Heart right ventricle (tissue), 16 donors: ENCODE measurements at regions of chr4 and their contacts with region 1.

Region 1: DNA sequence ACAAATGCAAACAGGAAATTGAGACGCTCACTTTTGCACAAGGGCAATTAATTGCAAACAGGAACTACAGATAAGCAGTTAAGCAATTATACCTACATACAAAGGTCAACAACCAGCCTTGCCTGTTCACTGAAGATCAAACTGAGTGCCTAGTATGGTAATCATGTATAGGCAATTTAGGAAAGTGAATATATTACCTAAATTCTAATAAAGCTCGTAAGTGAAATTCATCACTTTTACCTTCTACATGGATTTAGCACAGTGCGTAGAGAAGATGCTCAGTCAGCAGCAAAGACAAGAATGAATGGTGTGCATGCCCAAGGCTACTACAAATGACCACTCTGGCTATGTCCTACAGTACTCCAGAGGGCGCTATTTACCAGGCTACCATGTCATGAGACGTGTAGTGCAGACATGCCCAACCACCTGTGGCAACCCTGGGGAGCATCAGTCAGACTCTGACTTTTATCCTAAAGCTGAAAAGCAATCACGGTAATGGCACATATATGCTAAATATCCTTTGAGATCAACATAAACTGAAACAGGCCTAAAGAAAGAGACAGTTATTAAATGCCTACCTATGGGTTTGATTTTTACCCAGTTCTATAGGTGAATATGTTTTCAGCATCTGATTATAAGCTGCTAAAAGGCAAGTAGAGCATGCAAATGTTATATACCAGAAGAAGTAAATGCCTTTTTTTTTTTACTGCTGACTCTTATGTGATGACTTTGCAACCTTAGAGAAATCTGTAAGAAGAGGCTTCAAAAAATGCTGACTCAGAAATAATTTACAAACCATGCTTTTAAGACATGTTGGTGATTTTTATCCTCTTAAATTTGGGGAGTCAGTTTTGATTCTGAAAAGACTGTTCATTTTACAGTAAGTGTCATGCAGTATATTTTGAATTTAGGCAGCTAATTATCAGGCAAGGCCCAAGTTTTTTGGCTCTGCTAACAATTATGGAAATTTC is 178.0 kb downstream of the PPP3CA start:
- DNase-seq: peak in 1 of 2 donors; percentile 72
- ATAC-seq: peak; percentile 87 to 97 (median 94)
- H3K4me3 ChIP-seq: no peak overlapping the region
- H3K27ac ChIP-seq: no peak overlapping the region
- H3K4me1 ChIP-seq: peaks cover 0 to 21% (median 0%) of the 10 kb centered on the region in 9 donors
- H3K27me3 ChIP-seq: no peaks in the 10 kb centered on the region
- CTCF ChIP-seq: peak; percentile 62 to 88 (median 80)

Region 2: DNA sequence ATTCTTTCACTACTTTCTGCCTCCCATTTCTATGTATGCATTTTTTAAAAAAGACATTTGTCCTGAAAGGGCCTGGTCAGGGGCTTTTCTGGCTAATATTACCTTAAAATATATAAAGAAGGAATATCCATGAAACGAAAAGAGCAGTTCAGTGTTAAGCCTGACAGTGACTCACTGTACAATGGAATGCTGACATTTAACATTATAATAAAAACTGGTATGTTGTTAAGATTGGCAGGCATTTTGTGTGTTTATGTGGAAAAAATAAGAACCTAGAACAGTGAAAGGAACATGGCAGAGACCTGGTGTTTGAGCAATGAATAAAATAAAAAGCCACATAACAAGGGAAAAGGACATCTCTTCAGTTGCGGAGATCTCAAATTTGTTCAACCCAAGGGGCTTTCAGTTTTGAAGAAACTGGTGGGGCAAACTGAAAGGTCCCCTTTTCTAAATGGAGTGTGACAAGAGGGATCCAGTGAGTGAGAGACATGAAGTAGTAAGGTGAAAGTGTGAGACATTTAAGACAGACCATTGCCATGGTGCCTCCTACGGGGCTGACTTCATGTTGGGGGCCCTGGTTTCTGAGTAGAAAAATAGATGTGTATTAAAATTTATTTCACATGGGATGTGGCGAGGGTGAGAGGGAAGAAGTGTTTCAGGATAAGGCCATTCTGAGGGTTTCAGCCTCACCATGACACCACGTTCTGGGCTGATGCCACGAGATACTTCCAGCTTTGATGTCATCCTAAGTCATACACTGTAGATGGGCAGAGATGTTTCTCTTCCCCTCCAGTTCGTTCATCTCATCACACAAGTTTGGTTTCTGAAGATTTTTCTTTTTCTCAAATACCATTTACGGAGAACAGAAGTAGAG is 146.9 kb before region 1 on chr4:
- intact Hi-C with region 1: no loop called
- DNase-seq: no peak
- ATAC-seq: no peak
- H3K4me3 ChIP-seq: no peak overlapping the region
- H3K27ac ChIP-seq: no peak overlapping the region
- H3K4me1 ChIP-seq: peaks cover 0 to 26% (median 7%) of the 10 kb centered on the region in 9 donors
- H3K27me3 ChIP-seq: no peaks in the 10 kb centered on the region
- CTCF ChIP-seq: no peak

Region 3: GRCh38 chr4:101321481-101322042 is 152.2 kb after region 1 on chr4:
- intact Hi-C with region 1: no loop called
- DNase-seq: no peak
- ATAC-seq: no peak
- H3K4me3 ChIP-seq: no peak overlapping the region
- H3K27ac ChIP-seq: no peak overlapping the region
- H3K4me1 ChIP-seq: peaks cover 0 to 21% (median 7%) of the 10 kb centered on the region in 9 donors
- H3K27me3 ChIP-seq: no peaks in the 10 kb centered on the region
- CTCF ChIP-seq: no peak

Region 4: DNA sequence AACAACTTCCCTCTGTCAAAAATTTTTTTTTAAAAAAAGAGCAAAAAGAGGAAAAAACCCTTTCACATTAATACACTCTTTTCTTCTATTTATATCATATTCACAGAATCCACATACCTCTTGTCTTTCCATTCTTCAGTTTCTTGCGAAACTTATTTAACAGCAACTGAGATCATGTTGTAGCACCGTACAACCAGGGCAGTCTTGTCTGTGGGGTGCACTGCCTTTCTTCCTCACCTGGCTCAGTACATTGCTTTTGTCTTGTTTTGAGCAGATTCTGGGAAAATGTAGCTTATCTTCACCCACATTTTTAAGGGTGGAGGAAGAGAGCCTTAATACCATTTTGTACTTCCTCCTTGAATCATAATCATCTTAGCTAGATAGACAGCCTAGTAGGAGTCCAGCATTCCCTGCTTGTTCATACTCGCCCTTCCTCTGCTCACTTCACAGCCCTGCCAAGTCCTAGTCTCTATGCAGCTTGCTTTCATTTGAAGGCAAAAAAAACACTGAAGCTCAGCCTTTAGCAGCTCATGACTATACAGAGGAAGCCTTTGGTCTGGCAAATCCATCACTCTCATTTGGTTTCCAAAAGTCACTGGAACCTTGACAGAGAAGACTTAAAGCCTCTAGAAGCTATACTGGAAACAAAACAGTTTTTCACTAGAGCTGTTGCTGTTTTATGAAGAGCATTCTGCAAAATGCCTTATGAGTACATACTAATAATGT is 480.6 kb after region 1 on chr4:
- intact Hi-C with region 1: loop called in 2 of 10 experiments (anchors 10 kb)
- DNase-seq: no peak
- ATAC-seq: peak; percentile 36 to 64 (median 52)
- H3K4me3 ChIP-seq: no peak overlapping the region
- H3K27ac ChIP-seq: peak overlapping the region in 5 of 10 donors; percentile 24 to 46 (median 30)
- H3K4me1 ChIP-seq: peaks cover 0 to 24% (median 8%) of the 10 kb centered on the region in 9 donors
- H3K27me3 ChIP-seq: no peaks in the 10 kb centered on the region
- CTCF ChIP-seq: no peak

Region 5: DNA sequence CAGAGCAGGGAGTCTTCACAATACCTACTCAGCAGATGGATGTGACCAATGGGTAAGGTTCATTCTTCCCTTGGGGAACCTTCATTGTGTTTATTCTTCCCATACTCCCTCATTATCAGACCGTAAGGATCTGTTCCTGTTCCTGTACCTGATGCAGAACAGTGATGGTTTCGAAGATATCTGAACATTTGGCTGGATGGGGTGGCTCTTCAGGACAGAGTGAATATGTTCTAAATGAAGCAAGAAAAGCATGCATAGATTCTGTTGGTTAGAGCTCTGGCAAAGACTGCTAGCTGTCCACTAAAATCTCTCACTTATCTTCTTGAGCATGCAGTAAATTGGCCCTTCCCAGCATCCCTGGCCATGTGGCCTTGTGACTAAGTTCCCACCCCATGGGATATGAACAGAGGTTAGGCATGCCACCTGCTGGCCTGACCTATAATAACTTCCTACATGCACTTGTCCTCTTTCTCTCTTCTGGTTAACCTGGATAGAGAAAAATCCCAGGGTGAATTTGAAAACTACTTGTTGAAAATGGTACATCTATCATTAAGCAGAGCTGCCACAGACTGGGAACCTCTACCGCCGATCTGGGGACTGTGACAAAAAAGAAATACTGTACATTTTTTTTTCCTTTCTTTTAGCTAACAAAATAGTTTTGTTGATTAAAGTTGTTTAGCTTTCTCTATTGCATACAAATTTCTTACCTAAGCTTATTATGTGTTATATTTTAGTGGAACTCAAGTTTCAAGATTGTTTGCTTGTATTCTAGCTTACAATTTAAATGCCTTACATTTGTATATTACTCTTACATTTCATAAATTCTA is 561.2 kb after region 1 on chr4:
- intact Hi-C with region 1: loop called (anchors 1 to 5 kb)
- DNase-seq: peak; percentile 19 to 66
- ATAC-seq: peak; percentile 68 to 94 (median 80)
- H3K4me3 ChIP-seq: no peak overlapping the region
- H3K27ac ChIP-seq: no peak overlapping the region
- H3K4me1 ChIP-seq: no peaks in the 10 kb centered on the region
- H3K27me3 ChIP-seq: no peaks in the 10 kb centered on the region
- CTCF ChIP-seq: peak; percentile 38 to 80 (median 75)